Posterior vena cava (tissue), 2 donors: ENCODE measurements at regions of chr19 and their contacts with region 1.

Region 1: DNA sequence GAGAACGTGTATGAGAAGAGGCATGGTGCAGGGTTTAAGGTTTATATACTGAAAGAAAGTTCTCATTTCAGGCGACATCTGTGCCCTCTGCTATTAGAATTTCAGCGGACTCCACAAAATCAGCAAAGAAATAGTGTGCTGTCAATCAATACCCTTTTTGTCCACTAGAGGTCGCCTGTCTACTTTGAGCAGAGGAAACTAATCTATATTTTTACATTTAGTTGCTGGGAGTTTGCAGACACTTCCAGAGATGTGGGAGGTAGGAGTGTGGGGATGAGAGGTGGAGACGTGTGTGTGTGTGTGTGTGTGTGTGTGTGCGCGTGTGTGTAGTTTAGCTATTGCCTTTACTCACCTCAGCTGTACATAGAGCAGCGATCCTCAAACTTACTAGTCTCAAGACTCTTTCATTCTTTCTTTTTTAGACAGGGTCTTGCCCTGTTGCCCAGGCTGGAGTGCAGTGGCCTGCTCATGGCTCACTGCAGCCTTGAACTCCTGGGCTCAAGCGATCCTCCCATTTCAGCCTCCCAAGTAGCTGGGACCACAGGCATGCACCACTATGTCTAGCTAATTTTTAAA is 9.7 kb downstream of the INAFM1 start:
- DNase-seq: no peak

Region 2: GRCh38 chr19:46265217-46265828 is 1019.1 kb before region 1 on chr19:
- intact Hi-C with region 1: no loop called
- DNase-seq: no peak

Region 3: DNA sequence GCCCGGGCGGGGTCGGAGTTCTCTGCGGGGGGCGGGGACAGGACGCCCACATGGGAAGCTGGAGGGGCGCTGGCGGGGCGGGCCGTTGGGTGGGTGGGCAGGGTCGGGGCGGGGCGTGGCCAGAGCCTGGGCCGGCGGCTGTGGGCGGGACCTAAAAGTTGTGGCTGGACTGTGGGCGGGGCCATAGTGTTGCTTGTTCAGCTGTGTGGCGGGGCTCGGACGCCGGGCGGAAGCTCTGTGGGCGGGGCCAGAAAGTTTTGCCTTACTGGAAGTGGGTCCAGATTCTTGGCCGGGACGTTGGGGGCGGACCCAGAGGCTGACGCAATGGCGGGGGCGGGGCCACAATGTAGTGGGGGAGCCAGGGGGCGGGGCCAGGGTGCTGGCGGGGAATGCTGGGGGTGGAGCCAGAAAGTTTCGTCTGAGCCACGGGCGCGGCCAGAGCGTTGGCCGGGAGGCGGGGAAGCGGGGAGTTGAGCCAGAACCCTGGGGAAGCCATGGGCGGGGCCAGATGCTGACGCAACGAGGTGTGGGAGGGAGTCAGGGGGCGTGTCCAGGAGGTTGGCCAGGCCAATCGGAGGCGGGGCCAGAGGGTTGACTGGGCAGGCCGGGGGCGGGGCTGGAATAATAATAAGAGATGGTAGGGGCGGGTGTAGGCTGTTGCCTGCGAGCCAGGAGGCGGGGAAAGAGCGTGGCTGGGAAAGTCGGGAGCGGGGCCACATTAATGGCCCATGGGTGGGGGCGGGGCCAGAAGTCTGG is 27.5 kb before region 1 on chr19:
- intact Hi-C with region 1: no loop called
- DNase-seq: peak; percentile 100

Region 4: GRCh38 chr19:47370045-47370611 is 85.7 kb after region 1 on chr19:
- intact Hi-C with region 1: no loop called
- DNase-seq: no peak

Region 5: GRCh38 chr19:47391510-47392223 is 107.3 kb after region 1 on chr19:
- intact Hi-C with region 1: loop called in 1 of 2 experiments (anchors 5 kb)
- DNase-seq: peak; percentile 94

Region 6: GRCh38 chr19:47707135-47707925 is 422.9 kb after region 1 on chr19:
- intact Hi-C with region 1: loop called in 1 of 2 experiments (anchors 10 kb)
- DNase-seq: peak; percentile 90